ENCODE measurements at regions of chr7 and their contacts with region 1.

Region 1: DNA sequence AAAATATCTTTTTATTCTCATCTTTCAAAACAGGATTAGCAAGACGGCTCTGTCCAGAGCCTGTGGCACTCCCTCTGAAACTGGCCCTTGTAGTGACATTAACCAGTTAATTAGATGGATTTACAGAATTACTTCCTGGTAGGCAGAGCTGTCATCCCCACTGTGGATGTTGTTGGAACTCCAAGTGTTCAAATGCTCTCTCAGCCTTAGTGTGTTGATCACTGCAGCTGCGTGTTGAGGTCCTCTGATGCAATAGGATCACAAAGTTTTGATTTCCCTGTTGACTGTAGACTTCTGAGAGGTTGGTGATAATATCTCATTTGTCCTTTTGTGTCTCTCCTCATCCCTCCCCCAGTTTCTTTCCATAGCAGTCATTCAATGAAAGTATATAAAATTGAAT is 117.3 kb upstream of the CDK6 start:
- DNase-seq: no peak
- ATAC-seq: no peak
- H3K4me3 ChIP-seq: no peak overlapping the region
- H3K27ac ChIP-seq: no peak overlapping the region
- H3K4me1 ChIP-seq: no peaks in the 10 kb centered on the region
- H3K27me3 ChIP-seq: no peaks in the 10 kb centered on the region
- CTCF ChIP-seq: no peak

Region 2: DNA sequence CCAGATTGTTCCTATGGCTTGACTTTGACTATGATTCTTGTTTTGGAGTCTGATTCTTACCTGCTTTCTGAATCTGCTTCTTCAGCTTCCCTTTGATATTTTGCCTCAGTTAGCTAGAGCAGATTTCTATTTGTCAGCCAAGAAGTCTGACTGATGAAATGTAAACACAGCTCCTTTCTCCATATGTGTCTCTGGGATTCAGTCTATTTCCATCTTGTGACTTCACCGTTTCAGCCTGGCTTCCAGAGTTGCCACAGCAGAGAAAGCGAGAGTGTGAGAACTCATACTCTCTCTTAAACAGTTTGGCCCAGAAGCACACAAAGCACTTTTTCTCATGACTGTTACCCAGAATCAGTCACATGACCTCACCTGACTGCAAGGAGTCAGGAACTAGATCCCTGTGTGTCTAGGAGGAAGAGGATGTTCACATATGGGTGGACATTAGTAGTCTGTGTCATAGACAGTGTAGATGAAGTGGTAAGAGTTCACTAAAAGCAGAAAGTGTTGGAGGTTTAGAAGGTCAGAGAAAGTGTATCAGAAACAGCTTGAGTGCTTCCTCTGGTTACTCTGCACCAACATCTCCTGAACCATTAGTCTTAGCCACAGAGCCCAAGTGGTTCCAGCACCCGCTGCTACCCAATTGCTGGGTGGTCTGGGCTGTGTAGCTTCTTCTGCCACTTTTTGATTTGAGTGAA is 13.8 kb before region 1 on chr7:
- CTCF ChIA-PET with region 1: no interaction called
- POLR2A ChIA-PET with region 1: interaction called, 11 read pairs
- intact Hi-C with region 1: no loop called
- DNase-seq: no peak
- ATAC-seq: no peak
- H3K4me3 ChIP-seq: no peak overlapping the region
- H3K27ac ChIP-seq: no peak overlapping the region
- H3K4me1 ChIP-seq: no peaks in the 10 kb centered on the region
- H3K27me3 ChIP-seq: no peaks in the 10 kb centered on the region
- CTCF ChIP-seq: no peak

Region 3: DNA sequence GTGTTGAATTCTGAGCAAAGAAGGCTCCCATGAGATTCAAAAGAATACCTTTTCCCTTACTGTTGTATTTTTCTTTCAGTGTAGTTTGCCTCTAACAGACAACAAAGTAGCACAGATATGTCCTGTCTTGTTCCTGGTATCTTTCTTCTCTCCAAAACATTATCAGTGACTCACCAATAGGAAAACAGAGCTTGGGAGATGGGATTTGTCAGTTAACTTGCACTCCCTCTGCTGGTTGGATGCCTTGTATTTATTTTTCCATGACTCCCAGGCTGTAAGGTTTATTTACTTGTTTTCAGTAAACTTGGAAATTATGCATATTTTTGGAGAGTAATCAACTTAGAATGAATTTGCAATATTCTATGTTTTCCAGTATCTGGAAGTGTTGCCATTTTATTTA is 34.4 kb after region 1 on chr7:
- CTCF ChIA-PET with region 1: no interaction called
- POLR2A ChIA-PET with region 1: interaction called, 18 read pairs
- intact Hi-C with region 1: no loop called
- DNase-seq: peak; percentile 51
- ATAC-seq: peak; percentile 49
- H3K4me3 ChIP-seq: no peak overlapping the region
- H3K27ac ChIP-seq: no peak overlapping the region
- H3K4me1 ChIP-seq: no peaks in the 10 kb centered on the region
- H3K27me3 ChIP-seq: no peaks in the 10 kb centered on the region
- CTCF ChIP-seq: peak; percentile 75

Measured in PC-3 (cell line).